ENCODE measurements at regions of chr5 and their contacts with region 1.

Region 1: GRCh38 chr5:107555450-107556090 is 115.2 kb downstream of the EFNA5 start:
- DNase-seq: no peak
- ATAC-seq: no peak
- H3K4me3 ChIP-seq: no peak overlapping the region
- H3K4me3 Mint-ChIP-seq: no peak overlapping the region
- H3K27ac ChIP-seq: no peak overlapping the region
- H3K27ac Mint-ChIP-seq: no peak overlapping the region
- H3K4me1 ChIP-seq: no peaks in the 10 kb centered on the region
- H3K4me1 Mint-ChIP-seq: no peaks in the 10 kb centered on the region
- H3K27me3 ChIP-seq: no peaks in the 10 kb centered on the region
- H3K27me3 Mint-ChIP-seq: no peaks in the 10 kb centered on the region
- CTCF ChIP-seq: no peak

Region 2: DNA sequence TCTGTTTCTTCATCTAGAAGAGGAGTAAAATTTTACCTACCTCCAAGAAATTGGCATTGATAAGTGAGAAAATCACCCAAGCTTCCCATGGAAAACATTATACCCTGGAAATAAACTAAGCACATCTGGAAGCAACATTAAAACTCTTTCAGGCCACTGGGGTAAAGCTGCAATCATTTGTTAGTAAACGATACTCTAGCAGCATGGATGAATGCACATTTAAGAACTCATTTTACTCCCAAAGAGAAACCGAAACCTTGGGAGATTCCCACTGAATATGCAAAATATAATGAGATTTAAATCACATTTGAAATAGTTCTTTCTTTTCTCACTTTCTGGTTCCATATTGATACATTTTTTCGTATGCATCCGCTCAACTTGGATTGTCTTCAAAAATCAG is 352.3 kb before region 1 on chr5:
- CTCF ChIA-PET with region 1: no interaction called
- POLR2A ChIA-PET with region 1: no interaction called
- intact Hi-C with region 1: no loop called
- DNase-seq: no peak
- ATAC-seq: no peak
- H3K4me3 ChIP-seq: no peak overlapping the region
- H3K4me3 Mint-ChIP-seq: no peak overlapping the region
- H3K27ac ChIP-seq: no peak overlapping the region
- H3K27ac Mint-ChIP-seq: no peak overlapping the region
- H3K4me1 ChIP-seq: no peaks in the 10 kb centered on the region
- H3K4me1 Mint-ChIP-seq: no peaks in the 10 kb centered on the region
- H3K27me3 ChIP-seq: no peaks in the 10 kb centered on the region
- H3K27me3 Mint-ChIP-seq: no peaks in the 10 kb centered on the region
- CTCF ChIP-seq: no peak

Region 3: GRCh38 chr5:107381189-107381856 is 174.2 kb before region 1 on chr5:
- CTCF ChIA-PET with region 1: no interaction called
- POLR2A ChIA-PET with region 1: no interaction called
- intact Hi-C with region 1: no loop called
- DNase-seq: no peak
- ATAC-seq: no peak
- H3K4me3 ChIP-seq: no peak overlapping the region
- H3K4me3 Mint-ChIP-seq: no peak overlapping the region
- H3K27ac ChIP-seq: no peak overlapping the region
- H3K27ac Mint-ChIP-seq: no peak overlapping the region
- H3K4me1 ChIP-seq: no peaks in the 10 kb centered on the region
- H3K4me1 Mint-ChIP-seq: no peaks in the 10 kb centered on the region
- H3K27me3 ChIP-seq: no peaks in the 10 kb centered on the region
- H3K27me3 Mint-ChIP-seq: no peaks in the 10 kb centered on the region
- CTCF ChIP-seq: no peak

Region 4: DNA sequence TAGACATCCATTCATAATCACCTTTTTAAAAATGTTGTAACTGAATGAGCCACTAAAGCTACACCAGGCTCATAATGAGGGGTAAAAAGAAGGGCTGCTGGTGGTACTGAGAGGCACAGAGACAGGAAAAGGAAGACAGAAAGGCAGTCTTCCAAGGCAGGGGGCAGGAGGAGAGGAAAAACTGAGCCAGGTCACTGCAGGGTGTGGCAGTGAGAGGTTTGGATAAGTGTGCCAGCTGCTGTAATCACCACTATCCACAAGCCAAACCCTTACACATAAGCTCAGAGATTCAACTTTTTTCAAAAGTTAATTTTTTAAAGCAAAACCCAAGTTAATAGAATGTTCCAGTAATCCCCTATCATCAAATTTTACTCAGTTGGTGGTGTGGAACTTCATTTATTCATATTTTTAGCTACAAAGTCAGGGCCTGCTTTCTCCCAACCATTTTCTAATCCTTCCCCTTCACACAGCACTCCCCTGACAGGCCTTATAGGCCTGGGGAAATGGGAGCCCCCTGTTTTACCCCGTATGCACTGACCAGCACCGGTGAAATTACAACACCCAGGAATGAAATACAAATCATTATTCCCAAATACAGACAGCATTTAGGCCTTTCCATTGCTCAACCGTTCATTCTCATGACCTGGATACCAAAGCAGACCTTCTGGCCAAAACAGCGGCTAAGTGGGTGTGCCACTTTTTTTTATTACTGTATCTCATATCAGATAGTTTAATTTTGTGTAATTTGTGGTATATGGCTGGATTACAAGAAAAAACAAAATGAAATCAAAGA is 38.9 kb after region 1 on chr5:
- CTCF ChIA-PET with region 1: no interaction called
- POLR2A ChIA-PET with region 1: no interaction called
- intact Hi-C with region 1: loop called in 1 of 2 experiments (anchors 2 kb)
- DNase-seq: no peak
- ATAC-seq: no peak
- H3K4me3 ChIP-seq: no peak overlapping the region
- H3K4me3 Mint-ChIP-seq: no peak overlapping the region
- H3K27ac ChIP-seq: no peak overlapping the region
- H3K27ac Mint-ChIP-seq: no peak overlapping the region
- H3K4me1 ChIP-seq: no peaks in the 10 kb centered on the region
- H3K4me1 Mint-ChIP-seq: no peaks in the 10 kb centered on the region
- H3K27me3 ChIP-seq: no peaks in the 10 kb centered on the region
- H3K27me3 Mint-ChIP-seq: peaks cover 5% of the 10 kb centered on the region
- CTCF ChIP-seq: no peak

Region 5: GRCh38 chr5:107652839-107653607 is 97.5 kb after region 1 on chr5:
- CTCF ChIA-PET with region 1: no interaction called
- POLR2A ChIA-PET with region 1: no interaction called
- intact Hi-C with region 1: no loop called
- DNase-seq: no peak
- ATAC-seq: no peak
- H3K4me3 ChIP-seq: no peak overlapping the region
- H3K4me3 Mint-ChIP-seq: no peak overlapping the region
- H3K27ac ChIP-seq: no peak overlapping the region
- H3K27ac Mint-ChIP-seq: no peak overlapping the region
- H3K4me1 ChIP-seq: no peaks in the 10 kb centered on the region
- H3K4me1 Mint-ChIP-seq: no peaks in the 10 kb centered on the region
- H3K27me3 ChIP-seq: no peaks in the 10 kb centered on the region
- H3K27me3 Mint-ChIP-seq: peaks cover 28% of the 10 kb centered on the region
- CTCF ChIP-seq: no peak

Measured in CD4-positive, alpha-beta T cell (primary cell).